B cell (primary cell): ENCODE measurements at regions of chr5 and their contacts with region 1.

Region 1: DNA sequence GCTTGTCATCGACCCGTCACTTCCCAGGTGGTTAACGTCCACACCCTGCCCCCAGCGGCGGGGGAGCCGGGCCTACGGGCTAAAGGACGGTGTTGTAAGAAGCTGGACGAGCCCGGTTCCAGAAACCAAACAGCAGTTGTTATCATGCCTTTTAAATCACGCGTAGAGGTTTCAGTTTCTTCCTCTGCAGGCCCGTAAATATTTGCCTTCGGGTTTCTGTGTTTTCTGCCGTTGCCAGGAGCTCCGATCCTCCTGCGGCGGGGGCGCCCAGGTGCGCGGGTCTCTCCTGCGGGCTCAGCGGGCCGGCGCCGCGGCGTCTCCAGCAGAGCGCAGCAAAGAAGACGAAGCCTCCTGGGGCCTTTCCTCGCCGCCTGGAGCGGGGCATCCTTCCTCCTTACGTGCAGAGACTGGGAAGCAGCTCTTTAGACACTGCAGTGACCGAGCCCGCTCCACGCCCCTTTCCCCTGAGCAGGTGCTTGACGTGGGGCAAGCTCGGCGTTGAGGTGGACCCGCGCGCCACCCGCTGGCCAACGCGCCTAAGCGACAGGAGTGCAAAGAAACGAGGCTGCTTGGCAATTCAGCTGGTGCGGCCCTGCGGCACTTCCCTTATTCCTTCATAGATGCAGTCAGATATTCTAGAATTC is 21.8 kb upstream of the TTC1 start:
- DNase-seq: peak; percentile 88
- ATAC-seq: peak; percentile 98
- H3K4me3 ChIP-seq: peak overlapping the region in 4 of 5 experiments; percentile 42 to 60 (median 54)
- H3K4me3 Mint-ChIP-seq: peak overlapping the region; percentile 79
- H3K27ac ChIP-seq: peak overlapping the region in 1 of 2 donors; percentile 45
- H3K27ac Mint-ChIP-seq: peak overlapping the region; percentile 51
- H3K4me1 ChIP-seq: peaks cover 6 to 7% of the 10 kb centered on the region in 2 donors
- H3K4me1 Mint-ChIP-seq: peaks cover 7% of the 10 kb centered on the region
- H3K27me3 ChIP-seq: peaks cover 0 to 4% (median 0%) of the 10 kb centered on the region in 4 experiments
- H3K27me3 Mint-ChIP-seq: peaks cover 16% of the 10 kb centered on the region
- CTCF ChIP-seq: peak; percentile 79

Region 2: GRCh38 chr5:159286420-159287035 is 700.6 kb before region 1 on chr5:
- CTCF ChIA-PET with region 1: interaction called, 126 read pairs
- POLR2A ChIA-PET with region 1: no interaction called
- intact Hi-C with region 1: loop called (anchors 1 kb)
- DNase-seq: peak; percentile 69
- ATAC-seq: peak; percentile 67
- H3K4me3 ChIP-seq: no peak overlapping the region
- H3K4me3 Mint-ChIP-seq: no peak overlapping the region
- H3K27ac ChIP-seq: no peak overlapping the region
- H3K27ac Mint-ChIP-seq: no peak overlapping the region
- H3K4me1 ChIP-seq: no peaks in the 10 kb centered on the region
- H3K4me1 Mint-ChIP-seq: no peaks in the 10 kb centered on the region
- H3K27me3 ChIP-seq: no peaks in the 10 kb centered on the region
- H3K27me3 Mint-ChIP-seq: no peaks in the 10 kb centered on the region
- CTCF ChIP-seq: peak; percentile 82

Region 3: GRCh38 chr5:159353661-159354252 is 633.4 kb before region 1 on chr5:
- CTCF ChIA-PET with region 1: no interaction called
- POLR2A ChIA-PET with region 1: no interaction called
- intact Hi-C with region 1: no loop called
- DNase-seq: no peak
- ATAC-seq: no peak
- H3K4me3 ChIP-seq: no peak overlapping the region
- H3K4me3 Mint-ChIP-seq: no peak overlapping the region
- H3K27ac ChIP-seq: no peak overlapping the region
- H3K27ac Mint-ChIP-seq: no peak overlapping the region
- H3K4me1 ChIP-seq: peaks cover 6 to 9% of the 10 kb centered on the region in 2 donors
- H3K4me1 Mint-ChIP-seq: peaks cover 18% of the 10 kb centered on the region
- H3K27me3 ChIP-seq: no peaks in the 10 kb centered on the region
- H3K27me3 Mint-ChIP-seq: no peaks in the 10 kb centered on the region
- CTCF ChIP-seq: no peak

Region 4: DNA sequence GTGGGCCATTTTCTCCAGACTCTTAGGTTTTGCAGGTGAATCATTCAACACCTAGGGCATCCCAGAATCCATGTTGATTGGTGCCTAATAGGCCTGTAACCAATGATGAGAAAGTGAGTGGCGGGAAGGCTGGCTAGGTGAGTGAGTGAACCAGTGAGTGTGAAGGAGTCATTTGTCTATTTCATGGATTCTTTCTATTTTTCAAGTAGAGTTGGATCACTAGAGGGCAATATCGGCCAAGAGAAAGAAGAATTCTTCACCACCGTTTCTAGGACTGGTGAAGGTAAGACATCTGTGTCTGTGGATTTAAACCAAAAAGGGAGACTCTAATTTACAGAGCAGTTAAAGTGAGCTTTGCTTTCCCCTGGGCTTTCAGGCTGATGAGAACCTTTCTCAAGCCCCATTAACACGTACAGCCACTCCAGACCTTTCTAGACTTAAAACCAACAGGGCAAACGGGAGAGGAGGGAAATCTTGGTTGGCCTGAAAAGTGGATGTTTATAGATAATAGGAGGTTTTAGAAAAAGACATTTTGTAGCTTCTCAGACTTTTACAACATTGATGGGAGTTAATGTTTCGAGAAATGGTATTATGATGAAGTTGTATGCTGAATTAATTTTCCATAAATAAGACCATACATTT is 542.6 kb before region 1 on chr5:
- CTCF ChIA-PET with region 1: interaction called, 26 read pairs
- POLR2A ChIA-PET with region 1: no interaction called
- intact Hi-C with region 1: loop called (anchors 1 kb)
- DNase-seq: peak; percentile 46
- ATAC-seq: no peak
- H3K4me3 ChIP-seq: no peak overlapping the region
- H3K4me3 Mint-ChIP-seq: no peak overlapping the region
- H3K27ac ChIP-seq: no peak overlapping the region
- H3K27ac Mint-ChIP-seq: peak overlapping the region; percentile 42
- H3K4me1 ChIP-seq: peaks cover 0 to 7% of the 10 kb centered on the region in 2 donors
- H3K4me1 Mint-ChIP-seq: peaks cover 8% of the 10 kb centered on the region
- H3K27me3 ChIP-seq: no peaks in the 10 kb centered on the region
- H3K27me3 Mint-ChIP-seq: no peaks in the 10 kb centered on the region
- CTCF ChIP-seq: peak; percentile 28

Region 5: DNA sequence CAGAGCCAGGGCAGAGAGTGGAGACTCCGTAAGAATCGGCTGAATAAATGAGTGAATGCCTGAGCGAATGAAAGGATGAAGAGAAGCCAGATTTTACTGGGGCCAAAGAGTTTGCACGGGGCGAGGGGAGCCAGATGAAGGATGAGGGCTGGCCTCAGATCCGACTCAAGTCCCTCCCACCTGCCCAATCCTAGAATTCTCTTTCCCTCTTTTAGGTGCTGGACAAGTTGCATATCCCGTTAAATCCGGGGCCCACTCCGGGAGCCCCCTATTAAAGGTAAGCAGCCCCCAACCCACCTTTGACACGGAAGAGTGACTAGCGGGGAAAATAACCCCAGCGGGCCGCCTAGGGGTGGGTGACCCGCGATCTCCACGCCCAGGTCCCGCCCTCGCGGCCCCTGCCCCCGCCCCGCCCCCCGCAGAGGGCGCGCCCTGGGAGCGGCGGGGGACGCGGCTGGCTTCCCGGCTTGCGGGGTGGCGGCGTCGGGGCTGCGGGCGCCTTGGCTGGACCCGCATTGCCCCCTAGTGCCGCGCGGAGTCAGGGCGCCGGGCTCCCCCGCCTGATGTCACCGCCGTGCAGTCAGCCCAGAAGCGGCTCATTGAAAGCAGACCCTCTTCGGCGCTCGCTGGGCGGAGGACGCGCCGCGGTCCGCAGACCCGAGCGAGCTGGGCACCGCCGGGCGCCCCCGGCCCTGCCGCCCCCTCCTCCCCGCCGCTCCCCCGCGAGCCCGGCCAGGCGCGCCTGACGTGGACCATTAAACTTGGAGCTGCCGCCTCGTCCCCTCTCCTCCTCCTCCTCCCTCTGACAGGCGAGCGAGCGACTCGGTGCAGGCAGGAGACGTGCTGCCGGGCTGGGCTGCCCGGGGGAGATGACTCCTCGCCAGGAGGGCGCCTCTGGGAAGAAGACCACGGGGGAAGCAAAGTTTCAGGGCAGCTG is 71.0 kb before region 1 on chr5 and contains the start of gene ADRA1B:
- CTCF ChIA-PET with region 1: interaction called, 7 read pairs
- POLR2A ChIA-PET with region 1: no interaction called
- intact Hi-C with region 1: loop called (anchors 1 kb)
- DNase-seq: peak; percentile 65
- ATAC-seq: peak; percentile 90
- H3K4me3 ChIP-seq: peak within 1 kb of the TSS in 2 of 5 experiments; percentile 29 to 48
- H3K4me3 Mint-ChIP-seq: peak within 1 kb of the TSS; percentile 80
- H3K27ac ChIP-seq: no peak within 1 kb of the TSS
- H3K27ac Mint-ChIP-seq: no peak within 1 kb of the TSS
- H3K4me1 ChIP-seq: peaks cover 10 to 15% of the 10 kb centered on the region in 2 donors
- H3K4me1 Mint-ChIP-seq: peaks cover 16% of the 10 kb centered on the region
- H3K27me3 ChIP-seq: peaks cover 0 to 43% (median 19%) of the 10 kb centered on the region in 4 experiments
- H3K27me3 Mint-ChIP-seq: peaks cover 51% of the 10 kb centered on the region
- CTCF ChIP-seq: peak; percentile 66
- total RNA-seq, gene ADRA1B: not detected in 2 replicates

Region 6: GRCh38 chr5:159975462-159976019 is 11.6 kb before region 1 on chr5:
- CTCF ChIA-PET with region 1: interaction called, 11 read pairs
- POLR2A ChIA-PET with region 1: no interaction called
- intact Hi-C with region 1: no loop called
- DNase-seq: no peak
- ATAC-seq: no peak
- H3K4me3 ChIP-seq: no peak overlapping the region
- H3K4me3 Mint-ChIP-seq: no peak overlapping the region
- H3K27ac ChIP-seq: no peak overlapping the region
- H3K27ac Mint-ChIP-seq: no peak overlapping the region
- H3K4me1 ChIP-seq: peaks cover 9 to 12% of the 10 kb centered on the region in 2 donors
- H3K4me1 Mint-ChIP-seq: peaks cover 13% of the 10 kb centered on the region
- H3K27me3 ChIP-seq: peaks cover 0 to 40% (median 24%) of the 10 kb centered on the region in 4 experiments
- H3K27me3 Mint-ChIP-seq: peaks cover 68% of the 10 kb centered on the region
- CTCF ChIP-seq: no peak

Region 7: DNA sequence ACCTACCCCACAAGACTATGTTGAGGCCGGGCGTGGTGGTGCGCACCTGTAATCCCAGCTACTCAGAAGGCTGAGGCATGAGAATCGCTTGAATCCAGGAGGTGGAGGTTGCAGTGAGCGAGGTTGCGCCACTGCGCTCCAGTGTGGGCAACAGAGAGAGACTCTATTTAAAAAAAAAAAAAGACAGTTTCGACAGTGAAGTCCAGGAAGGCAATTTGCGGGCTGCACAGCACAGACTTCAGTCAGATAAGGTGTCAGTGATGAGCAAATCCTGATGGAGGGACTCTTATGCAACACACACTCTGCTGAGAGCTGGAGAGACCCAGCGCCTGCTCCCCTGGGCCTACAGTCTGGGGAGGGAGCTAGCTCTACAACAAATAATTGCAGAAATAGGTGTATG is 311.0 kb after region 1 on chr5:
- CTCF ChIA-PET with region 1: no interaction called
- POLR2A ChIA-PET with region 1: no interaction called
- intact Hi-C with region 1: no loop called
- DNase-seq: no peak
- ATAC-seq: no peak
- H3K4me3 ChIP-seq: no peak overlapping the region
- H3K4me3 Mint-ChIP-seq: no peak overlapping the region
- H3K27ac ChIP-seq: no peak overlapping the region
- H3K27ac Mint-ChIP-seq: no peak overlapping the region
- H3K4me1 ChIP-seq: no peaks in the 10 kb centered on the region
- H3K4me1 Mint-ChIP-seq: no peaks in the 10 kb centered on the region
- H3K27me3 ChIP-seq: peaks cover 0 to 6% (median 2%) of the 10 kb centered on the region in 4 experiments
- H3K27me3 Mint-ChIP-seq: peaks cover 12% of the 10 kb centered on the region
- CTCF ChIP-seq: no peak